Activated CD4-positive, alpha-beta T cell treated with anti-CD3 and anti-CD28 coated beads for 36 hours (primary cell): ENCODE measurements at regions of chr19 and their contacts with region 1.

Region 1: GRCh38 chr19:1189419-1189818 is 15.4 kb upstream of the SBNO2 start:
- DNase-seq: peak; percentile 85
- ATAC-seq: peak; percentile 84
- H3K4me3 Mint-ChIP-seq: peak overlapping the region; percentile 38
- H3K27ac Mint-ChIP-seq: peak overlapping the region; percentile 69
- H3K4me1 Mint-ChIP-seq: peaks cover 34% of the 10 kb centered on the region
- H3K27me3 Mint-ChIP-seq: no peaks in the 10 kb centered on the region

Region 2: DNA sequence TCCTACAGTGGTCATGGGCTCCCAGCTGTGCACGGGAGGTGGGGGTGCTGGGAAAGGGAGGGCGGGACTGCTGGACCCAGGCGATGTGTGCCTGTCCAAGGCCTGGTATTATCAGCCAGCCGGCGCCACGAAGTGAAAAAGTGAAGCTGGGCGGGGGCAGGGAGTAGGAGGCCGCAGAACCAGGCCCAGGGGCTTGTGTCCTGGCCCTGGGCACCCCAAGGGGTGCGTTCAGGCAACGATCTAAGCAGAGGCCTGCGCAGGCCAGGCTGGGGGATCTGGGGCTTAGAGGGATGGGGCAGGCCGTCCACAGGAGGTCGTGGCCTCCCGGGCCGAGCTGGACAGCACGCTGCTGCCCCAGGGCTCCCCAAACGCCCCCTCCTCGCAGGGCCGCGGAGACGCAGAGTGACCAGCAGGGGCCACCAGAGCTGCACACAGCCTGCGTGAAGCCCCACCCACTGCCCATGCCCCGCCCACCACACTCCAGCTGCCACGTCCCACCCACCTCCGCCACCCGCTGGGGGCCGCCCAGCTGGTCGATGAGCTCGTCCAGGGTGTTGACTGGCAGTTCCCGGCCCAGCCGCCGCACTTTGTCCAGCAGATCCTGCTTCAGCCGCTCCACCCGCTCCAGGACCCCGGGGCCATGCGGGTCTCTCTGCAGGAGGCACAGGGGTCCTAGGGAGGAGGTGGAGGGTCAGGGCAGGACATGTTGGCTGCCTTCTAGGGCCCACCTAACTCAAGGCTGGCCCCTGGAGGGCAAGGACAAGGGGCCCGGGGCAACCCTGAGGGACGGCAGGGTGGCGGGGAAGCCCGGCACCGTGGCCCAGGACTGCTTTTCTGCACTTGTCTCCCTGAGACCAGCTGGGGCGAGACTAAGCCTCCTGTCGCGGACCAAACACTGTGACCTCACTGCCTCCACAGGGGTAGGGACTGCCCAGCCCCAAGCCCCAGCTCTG is 76.1 kb before region 1 on chr19:
- CTCF ChIA-PET with region 1: interaction called, 23 read pairs
- POLR2A ChIA-PET with region 1: no interaction called
- intact Hi-C with region 1: loop called (anchors 5 kb)
- DNase-seq: peak; percentile 94
- ATAC-seq: peak; percentile 89
- H3K4me3 Mint-ChIP-seq: no peak overlapping the region
- H3K27ac Mint-ChIP-seq: no peak overlapping the region
- H3K4me1 Mint-ChIP-seq: no peaks in the 10 kb centered on the region
- H3K27me3 Mint-ChIP-seq: no peaks in the 10 kb centered on the region